HEK293 (cell line): ENCODE measurements at regions of chr1 and their contacts with region 1.

Region 1: GRCh38 chr1:37692078-37692833 is at the start of gene CDCA8:
- H3K4me3 ChIP-seq: peak within 1 kb of the TSS; percentile 96
- H3K27ac ChIP-seq: peak within 1 kb of the TSS; percentile 77
- H3K4me1 ChIP-seq: peaks cover 6% of the 10 kb centered on the region; the same call in 1 of the 2 replicates
- CTCF ChIP-seq: peak; percentile 93

Region 2: DNA sequence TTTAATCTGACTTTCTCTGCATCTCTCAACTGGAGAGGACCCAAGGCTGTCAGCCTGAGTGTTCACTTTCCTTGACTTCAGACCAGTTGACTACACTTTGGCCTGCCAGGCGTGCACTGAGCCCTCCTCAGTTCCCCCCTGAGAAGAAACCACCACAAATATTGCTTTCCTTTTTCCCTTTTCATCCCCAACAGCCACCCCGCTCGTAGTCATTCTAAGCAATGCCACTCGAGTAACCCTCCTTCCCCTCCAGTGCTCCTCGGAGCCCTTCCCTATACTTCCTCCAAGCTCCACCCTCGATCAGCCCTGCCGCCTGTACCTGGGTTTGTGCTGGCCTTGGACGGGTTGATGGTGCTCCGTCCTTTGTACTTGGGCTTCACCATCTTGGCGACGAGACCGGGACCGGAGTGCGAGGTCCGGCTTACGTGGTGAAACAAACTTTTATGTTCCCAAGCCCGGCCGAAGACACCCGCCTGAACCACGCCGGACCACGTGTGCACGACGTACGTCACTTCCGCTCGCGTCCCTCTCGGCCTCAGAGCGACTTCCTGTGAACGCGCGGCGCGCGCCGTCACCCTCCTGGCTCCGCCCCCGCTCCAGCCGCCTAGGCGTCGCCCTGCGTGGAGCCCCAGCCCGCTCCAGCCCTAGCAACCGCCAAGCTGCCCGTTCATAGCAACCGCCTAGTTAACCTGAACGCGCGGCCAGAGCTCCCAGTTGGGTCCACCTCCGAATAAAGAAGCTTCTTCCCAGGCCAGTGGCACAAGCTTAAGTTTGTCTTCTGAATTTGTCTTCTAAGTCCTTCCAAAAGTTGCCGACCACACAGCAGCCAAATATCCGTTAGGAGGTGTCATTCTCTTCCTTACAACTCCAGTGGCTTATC is 96.6 kb before region 1 on chr1 and contains the start of gene GNL2:
- CTCF ChIA-PET with region 1: interaction called, 3 read pairs
- POLR2A ChIA-PET with region 1: interaction called, 11 read pairs
- H3K4me3 ChIP-seq: peak within 1 kb of the TSS; percentile 94
- H3K27ac ChIP-seq: peak within 1 kb of the TSS; percentile 41; the same call in 1 of the 2 replicates
- H3K4me1 ChIP-seq: peaks cover 7% of the 10 kb centered on the region
- CTCF ChIP-seq: 0 out of 2 replicates have a peak, but pooled peaks have one; percentile 19

Region 3: DNA sequence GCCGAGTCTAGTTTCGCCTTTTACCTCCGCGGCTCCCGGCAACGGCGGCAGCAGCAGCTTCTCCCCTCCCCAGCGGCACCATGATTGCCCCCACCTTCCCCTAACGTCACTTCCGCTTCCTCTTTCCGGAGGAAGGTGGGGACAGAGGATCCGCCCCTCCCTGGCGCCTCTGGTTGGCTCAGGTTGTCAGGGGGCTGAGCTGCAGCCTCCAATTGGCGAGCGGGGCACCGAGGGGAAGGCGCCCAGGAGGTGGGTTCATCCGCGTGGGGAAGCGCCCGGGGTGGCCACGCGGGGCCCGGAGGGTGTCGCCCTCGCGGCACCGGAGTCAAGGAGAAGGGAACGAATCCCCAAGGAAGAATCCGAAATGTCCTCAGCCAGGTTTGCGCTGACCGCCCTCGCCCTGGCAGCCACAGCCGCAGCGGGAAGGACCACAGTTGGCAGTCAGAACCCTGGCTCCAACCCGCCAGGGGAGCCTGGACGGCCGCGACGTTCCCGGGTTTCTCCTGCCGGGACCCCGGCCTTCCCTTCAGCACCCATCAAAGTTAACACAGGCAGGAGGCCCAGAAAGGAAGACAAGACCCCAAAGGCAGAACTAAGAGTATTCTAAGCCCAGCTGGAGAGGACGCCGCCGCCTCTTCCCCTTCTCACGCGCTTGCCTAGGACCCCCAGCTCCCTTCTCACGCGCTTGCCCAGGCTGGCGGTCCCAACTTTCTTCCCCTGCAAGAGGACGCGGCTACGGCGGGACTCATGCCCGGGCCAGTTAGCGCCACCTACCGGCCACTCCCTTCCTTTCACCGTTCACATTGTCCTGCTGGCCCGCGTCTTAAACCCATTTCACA is 167.5 kb after region 1 on chr1 and contains the start of gene MTF1:
- CTCF ChIA-PET with region 1: interaction called, 8 read pairs
- POLR2A ChIA-PET with region 1: interaction called, 12 read pairs
- H3K4me3 ChIP-seq: peak within 1 kb of the TSS; percentile 100
- H3K27ac ChIP-seq: peak within 1 kb of the TSS; percentile 47; the same call in 1 of the 2 replicates
- H3K4me1 ChIP-seq: no peaks in the 10 kb centered on the region
- CTCF ChIP-seq: peak; percentile 93